PC-9 (cell line): ENCODE measurements at regions of chr17 and their contacts with region 1.

Region 1: GRCh38 chr17:32609085-32609484 is 122.3 kb downstream of the CDK5R1 start:
- DNase-seq: peak; percentile 63 to 74
- H3K4me3 ChIP-seq: no peak overlapping the region
- H3K27ac ChIP-seq: no peak overlapping the region
- H3K4me1 ChIP-seq: no peaks in the 10 kb centered on the region
- H3K27me3 ChIP-seq: no peaks in the 10 kb centered on the region
- CTCF ChIP-seq: peak; percentile 59

Region 2: GRCh38 chr17:31877911-31878702 is 731.0 kb before region 1 on chr17:
- CTCF ChIA-PET with region 1: no interaction called
- POLR2A ChIA-PET with region 1: no interaction called
- intact Hi-C with region 1: no loop called
- DNase-seq: no peak
- H3K4me3 ChIP-seq: no peak overlapping the region
- H3K27ac ChIP-seq: no peak overlapping the region
- H3K4me1 ChIP-seq: no peaks in the 10 kb centered on the region
- H3K27me3 ChIP-seq: no peaks in the 10 kb centered on the region
- CTCF ChIP-seq: no peak

Region 3: GRCh38 chr17:31888124-31888523 is 721.0 kb before region 1 on chr17:
- CTCF ChIA-PET with region 1: no interaction called
- POLR2A ChIA-PET with region 1: no interaction called
- intact Hi-C with region 1: no loop called
- DNase-seq: no peak
- H3K4me3 ChIP-seq: no peak overlapping the region
- H3K27ac ChIP-seq: no peak overlapping the region
- H3K4me1 ChIP-seq: no peaks in the 10 kb centered on the region
- H3K27me3 ChIP-seq: no peaks in the 10 kb centered on the region
- CTCF ChIP-seq: no peak

Region 4: GRCh38 chr17:32461853-32462617 is 147.1 kb before region 1 on chr17:
- CTCF ChIA-PET with region 1: no interaction called
- POLR2A ChIA-PET with region 1: no interaction called
- intact Hi-C with region 1: loop called (anchors 1 kb)
- DNase-seq: peak in 1 of 2 experiments; percentile 41
- H3K4me3 ChIP-seq: no peak overlapping the region
- H3K27ac ChIP-seq: no peak overlapping the region
- H3K4me1 ChIP-seq: no peaks in the 10 kb centered on the region
- H3K27me3 ChIP-seq: no peaks in the 10 kb centered on the region
- CTCF ChIP-seq: peak; percentile 65

Region 5: DNA sequence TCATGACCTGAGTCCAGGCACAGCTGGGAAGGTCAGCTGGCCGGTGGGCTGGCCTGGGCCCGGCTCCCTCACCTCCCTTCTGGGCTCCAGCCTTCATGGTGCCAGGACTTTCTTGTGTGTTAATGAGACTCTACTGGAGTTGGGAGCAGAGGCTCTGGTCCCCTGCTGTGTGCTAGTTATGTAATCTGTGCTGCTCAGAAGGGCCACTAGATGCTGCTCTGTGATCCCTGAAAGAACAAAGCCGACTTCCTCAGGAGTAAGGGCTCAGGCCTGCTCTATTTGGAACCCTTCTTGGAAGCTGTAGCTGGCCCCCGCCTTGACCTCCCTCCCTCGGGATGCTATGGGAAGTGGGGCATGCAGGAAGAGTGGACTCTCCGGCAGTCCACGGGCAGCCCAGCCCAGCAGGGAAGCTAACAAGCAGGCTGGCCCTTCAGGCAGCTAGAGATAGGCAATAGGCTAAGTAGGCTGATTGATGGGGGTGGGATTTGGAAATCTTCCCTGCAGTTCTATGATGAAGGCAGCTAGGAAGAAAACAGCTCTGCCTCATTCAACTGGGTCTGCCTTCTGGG is 125.5 kb before region 1 on chr17:
- CTCF ChIA-PET with region 1: no interaction called
- POLR2A ChIA-PET with region 1: no interaction called
- intact Hi-C with region 1: loop called (anchors 1 kb)
- DNase-seq: peak; percentile 37 to 53
- H3K4me3 ChIP-seq: no peak overlapping the region
- H3K27ac ChIP-seq: no peak overlapping the region
- H3K4me1 ChIP-seq: peaks cover 8% of the 10 kb centered on the region; the same call in 1 of the 2 replicates
- H3K27me3 ChIP-seq: no peaks in the 10 kb centered on the region
- CTCF ChIP-seq: peak; percentile 61; the same call in 1 of the 2 replicates

Region 6: GRCh38 chr17:32503251-32504165 is 105.6 kb before region 1 on chr17:
- CTCF ChIA-PET with region 1: no interaction called
- POLR2A ChIA-PET with region 1: no interaction called
- intact Hi-C with region 1: loop called (anchors 5 kb)
- DNase-seq: peak in 1 of 2 experiments; percentile 60
- H3K4me3 ChIP-seq: no peak overlapping the region
- H3K27ac ChIP-seq: no peak overlapping the region
- H3K4me1 ChIP-seq: peaks cover 11% of the 10 kb centered on the region; the same call in 1 of the 2 replicates
- H3K27me3 ChIP-seq: no peaks in the 10 kb centered on the region
- CTCF ChIP-seq: no peak